Cardiac septum (tissue), 1 donor: ENCODE measurements at regions of chr2 and their contacts with region 1.

Region 1: GRCh38 chr2:231152800-231153557 is 28.1 kb upstream of the HTR2B start:
- DNase-seq: no peak

Region 2: DNA sequence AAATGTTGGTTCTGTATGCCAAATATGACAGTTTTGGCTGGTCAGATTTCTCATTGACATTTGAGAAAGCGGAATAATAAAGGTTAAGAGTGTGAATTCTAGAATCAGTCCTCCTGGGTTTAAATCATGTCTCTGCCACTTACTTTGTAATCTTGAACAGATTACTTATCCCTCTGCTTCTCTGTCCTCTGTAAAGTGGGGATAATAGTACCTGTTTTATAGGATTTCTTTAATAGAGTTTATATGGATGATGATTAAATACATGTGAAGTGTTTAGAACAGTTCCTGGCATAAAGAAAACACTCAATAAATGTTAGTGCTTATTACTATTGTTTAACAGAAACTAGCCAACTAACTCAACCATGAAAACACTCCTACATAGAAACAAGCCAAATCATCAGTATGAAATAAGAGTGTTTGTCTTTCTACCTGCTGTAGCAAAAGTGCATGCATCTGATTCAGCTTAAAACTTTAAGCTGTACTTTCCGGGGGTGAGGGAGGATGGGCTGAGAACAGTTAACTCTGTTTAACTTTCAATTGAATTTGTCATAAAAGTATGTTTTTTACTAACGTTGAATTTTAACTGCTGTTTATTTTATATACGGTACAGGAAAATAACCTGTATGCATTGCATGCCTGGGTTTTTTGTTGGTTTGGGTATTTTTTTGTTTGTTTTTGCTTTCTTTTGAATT is 34.9 kb before region 1 on chr2:
- intact Hi-C with region 1: loop called (anchors 5 kb)
- DNase-seq: no peak

Region 3: GRCh38 chr2:231163011-231163410 is 10.0 kb after region 1 on chr2:
- intact Hi-C with region 1: loop called (anchors 1 kb)
- DNase-seq: no peak